Psoas muscle (tissue), 8 donors: ENCODE measurements at regions of chr15 and their contacts with region 1.

Region 1: DNA sequence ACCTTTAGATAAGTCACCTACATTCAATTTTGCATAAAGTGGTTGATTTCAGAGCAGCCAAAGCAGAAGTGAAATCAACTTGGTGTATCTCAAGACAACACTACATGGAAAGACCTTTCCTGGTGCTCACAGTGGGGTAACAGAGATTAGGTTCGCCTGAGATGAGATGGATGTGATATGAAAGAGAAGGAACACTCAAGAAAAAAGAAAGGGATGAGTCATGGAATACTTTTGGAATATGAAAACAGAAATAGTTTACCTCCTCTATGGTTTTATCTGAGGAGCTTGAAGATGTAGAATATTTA is 53.4 kb upstream of the AP4E1 start:
- DNase-seq: no peak
- ATAC-seq: no peak
- H3K4me3 ChIP-seq: no peak overlapping the region
- H3K27ac ChIP-seq: no peak overlapping the region
- H3K4me1 ChIP-seq: peaks cover 25% of the 10 kb centered on the region
- H3K27me3 ChIP-seq: no peaks in the 10 kb centered on the region
- CTCF ChIP-seq: no peak

Region 2: GRCh38 chr15:50613600-50613999 is 241.4 kb before region 1 on chr15:
- intact Hi-C with region 1: no loop called
- DNase-seq: no peak
- ATAC-seq: no peak
- H3K4me3 ChIP-seq: no peak overlapping the region
- H3K27ac ChIP-seq: no peak overlapping the region
- H3K4me1 ChIP-seq: no peaks in the 10 kb centered on the region
- H3K27me3 ChIP-seq: no peaks in the 10 kb centered on the region
- CTCF ChIP-seq: no peak

Region 3: GRCh38 chr15:50828610-50829219 is 26.3 kb before region 1 on chr15:
- intact Hi-C with region 1: loop called in 1 of 2 experiments (anchors 1 kb)
- DNase-seq: peak; percentile 45 to 72
- ATAC-seq: peak; percentile 95 to 98 (median 98)
- H3K4me3 ChIP-seq: no peak overlapping the region
- H3K27ac ChIP-seq: peak overlapping the region; percentile 69
- H3K4me1 ChIP-seq: peaks cover 9% of the 10 kb centered on the region
- H3K27me3 ChIP-seq: no peaks in the 10 kb centered on the region
- CTCF ChIP-seq: no peak